ENCODE measurements at regions of chr12 and their contacts with region 1.

Region 1: GRCh38 chr12:28034271-28034670 is 61.7 kb upstream of the PTHLH start:
- DNase-seq: no peak
- H3K4me3 ChIP-seq: no peak overlapping the region
- H3K27ac ChIP-seq: no peak overlapping the region
- H3K4me1 ChIP-seq: peaks cover 33% of the 10 kb centered on the region
- H3K27me3 ChIP-seq: no peaks in the 10 kb centered on the region
- CTCF ChIP-seq: no peak

Region 2: DNA sequence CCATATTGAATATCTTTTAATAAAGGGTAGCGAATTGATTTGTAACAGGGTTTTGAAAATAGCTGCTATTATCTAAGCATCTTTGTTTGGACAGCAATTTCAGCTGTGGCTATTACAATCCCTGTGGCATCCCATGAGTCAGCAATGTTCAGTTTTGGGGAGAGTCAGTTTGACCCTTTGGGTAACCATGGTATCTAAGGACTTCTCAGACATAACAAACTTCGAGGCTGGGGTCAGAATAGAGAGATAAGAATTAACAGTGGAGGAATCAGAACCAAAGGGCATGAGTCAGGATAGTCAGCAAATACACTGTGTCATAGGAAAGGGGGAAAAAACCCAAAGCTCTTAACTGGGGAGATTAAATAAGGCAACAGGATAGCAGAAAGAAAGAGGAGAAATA is 50.0 kb before region 1 on chr12:
- CTCF ChIA-PET with region 1: no interaction called
- POLR2A ChIA-PET with region 1: no interaction called
- intact Hi-C with region 1: no loop called
- DNase-seq: peak; percentile 32 to 73
- H3K4me3 ChIP-seq: no peak overlapping the region
- H3K27ac ChIP-seq: no peak overlapping the region
- H3K4me1 ChIP-seq: peaks cover 18% of the 10 kb centered on the region
- H3K27me3 ChIP-seq: no peaks in the 10 kb centered on the region
- CTCF ChIP-seq: no peak

Region 3: DNA sequence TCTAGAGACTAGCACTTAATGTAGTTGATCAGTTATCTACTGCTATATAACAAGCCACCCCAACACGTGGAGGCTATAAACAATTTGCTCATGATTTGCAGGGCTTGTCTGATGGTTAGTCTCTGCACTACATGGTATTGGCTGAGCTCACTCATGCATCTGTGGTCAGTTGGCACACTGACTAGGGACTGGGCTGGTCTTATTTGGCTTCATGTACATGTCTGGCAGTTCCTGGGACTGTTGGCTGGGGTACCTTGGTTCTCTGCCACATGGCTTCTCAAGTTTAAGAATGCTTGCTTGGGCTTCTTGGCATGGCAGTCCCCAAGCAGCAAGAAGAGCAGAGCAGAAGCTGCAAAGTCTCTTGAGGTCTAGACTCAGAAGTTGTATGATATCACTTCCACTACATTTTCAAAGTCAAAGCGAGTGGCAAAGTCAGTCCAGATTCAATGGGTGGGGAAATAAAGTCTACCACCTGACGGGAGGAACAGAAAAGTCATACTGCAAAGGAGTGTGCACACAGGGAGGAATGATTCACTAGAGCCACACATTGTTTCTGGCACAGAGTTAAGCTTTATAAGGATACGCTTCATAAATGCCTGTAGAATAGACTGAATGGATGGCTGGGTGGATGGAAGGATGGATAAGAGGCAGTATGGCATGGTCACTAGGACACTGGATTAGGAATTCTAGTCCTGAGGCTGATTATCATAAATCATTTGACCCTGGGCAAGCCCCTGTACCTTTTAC is 17.0 kb before region 1 on chr12:
- CTCF ChIA-PET with region 1: no interaction called
- POLR2A ChIA-PET with region 1: interaction called, 15 read pairs
- intact Hi-C with region 1: no loop called
- DNase-seq: no peak
- H3K4me3 ChIP-seq: no peak overlapping the region
- H3K27ac ChIP-seq: no peak overlapping the region
- H3K4me1 ChIP-seq: peaks cover 13% of the 10 kb centered on the region
- H3K27me3 ChIP-seq: no peaks in the 10 kb centered on the region
- CTCF ChIP-seq: no peak